ENCODE measurements at regions of chr1 and their contacts with region 1.

Region 1: GRCh38 chr1:21344750-21345443 is 54.6 kb upstream of the ECE1 start:
- DNase-seq: peak in 3 of 9 experiments; percentile 25 to 54 (median 30)
- ATAC-seq: peak; percentile 28
- H3K4me3 ChIP-seq: peak overlapping the region; percentile 75 to 94
- H3K4me3 Mint-ChIP-seq: peak overlapping the region; percentile 86
- H3K27ac ChIP-seq: peak overlapping the region in 1 of 2 experiments; percentile 55
- H3K27ac Mint-ChIP-seq: peak overlapping the region; percentile 76
- H3K4me1 ChIP-seq: peaks cover 53% of the 10 kb centered on the region
- H3K4me1 Mint-ChIP-seq: peaks cover 40% of the 10 kb centered on the region
- H3K27me3 ChIP-seq: peaks cover 0 to 8% of the 10 kb centered on the region in 2 experiments
- H3K27me3 Mint-ChIP-seq: no peaks in the 10 kb centered on the region
- CTCF ChIP-seq: no peak

Region 2: DNA sequence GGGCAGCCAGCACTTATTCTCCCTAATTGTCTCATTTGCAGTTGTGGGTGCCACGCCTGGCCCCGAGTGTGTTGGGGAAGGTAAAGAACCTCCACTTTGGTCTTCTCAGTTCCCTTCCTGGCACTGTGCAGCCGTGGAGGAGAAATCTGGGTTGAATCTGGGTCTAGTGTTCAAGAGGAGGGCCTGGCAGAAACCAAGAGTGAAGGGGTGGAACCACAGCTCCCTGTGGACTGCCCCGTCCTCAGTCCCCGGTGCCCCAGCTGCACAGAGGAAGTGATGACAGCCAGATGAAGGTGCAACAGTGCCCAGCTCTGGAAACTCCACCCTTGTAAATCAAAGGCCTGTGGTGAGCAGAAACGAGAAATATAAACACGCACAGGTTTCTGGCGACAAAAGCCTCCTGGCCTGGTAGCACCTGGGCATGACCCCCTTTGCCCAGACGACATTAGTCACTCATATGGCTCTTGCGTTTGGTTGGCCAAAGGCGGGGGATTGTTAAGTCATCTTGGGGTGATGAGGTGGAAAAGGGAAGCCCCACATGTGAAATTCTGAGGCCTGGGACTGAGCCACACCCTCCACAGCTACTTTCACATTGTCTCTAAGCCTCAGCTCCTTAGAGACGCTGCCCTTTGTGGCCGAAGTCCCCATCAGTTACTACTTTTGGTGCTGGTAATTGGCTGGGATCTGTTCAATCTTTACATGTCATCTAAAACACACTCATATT is 50.5 kb before region 1 on chr1:
- CTCF ChIA-PET with region 1: interaction called, 9 read pairs
- POLR2A ChIA-PET with region 1: interaction called, 42 read pairs
- intact Hi-C with region 1: loop called (anchors 1 kb)
- DNase-seq: peak; percentile 71 to 97 (median 85)
- ATAC-seq: peak; percentile 72
- H3K4me3 ChIP-seq: peak overlapping the region; percentile 44 to 86
- H3K4me3 Mint-ChIP-seq: peak overlapping the region; percentile 86
- H3K27ac ChIP-seq: peak overlapping the region; percentile 91 to 94
- H3K27ac Mint-ChIP-seq: peak overlapping the region; percentile 98
- H3K4me1 ChIP-seq: peaks cover 80% of the 10 kb centered on the region
- H3K4me1 Mint-ChIP-seq: peaks cover 82% of the 10 kb centered on the region
- H3K27me3 ChIP-seq: no peaks in the 10 kb centered on the region
- H3K27me3 Mint-ChIP-seq: no peaks in the 10 kb centered on the region
- CTCF ChIP-seq: no peak

Region 3: DNA sequence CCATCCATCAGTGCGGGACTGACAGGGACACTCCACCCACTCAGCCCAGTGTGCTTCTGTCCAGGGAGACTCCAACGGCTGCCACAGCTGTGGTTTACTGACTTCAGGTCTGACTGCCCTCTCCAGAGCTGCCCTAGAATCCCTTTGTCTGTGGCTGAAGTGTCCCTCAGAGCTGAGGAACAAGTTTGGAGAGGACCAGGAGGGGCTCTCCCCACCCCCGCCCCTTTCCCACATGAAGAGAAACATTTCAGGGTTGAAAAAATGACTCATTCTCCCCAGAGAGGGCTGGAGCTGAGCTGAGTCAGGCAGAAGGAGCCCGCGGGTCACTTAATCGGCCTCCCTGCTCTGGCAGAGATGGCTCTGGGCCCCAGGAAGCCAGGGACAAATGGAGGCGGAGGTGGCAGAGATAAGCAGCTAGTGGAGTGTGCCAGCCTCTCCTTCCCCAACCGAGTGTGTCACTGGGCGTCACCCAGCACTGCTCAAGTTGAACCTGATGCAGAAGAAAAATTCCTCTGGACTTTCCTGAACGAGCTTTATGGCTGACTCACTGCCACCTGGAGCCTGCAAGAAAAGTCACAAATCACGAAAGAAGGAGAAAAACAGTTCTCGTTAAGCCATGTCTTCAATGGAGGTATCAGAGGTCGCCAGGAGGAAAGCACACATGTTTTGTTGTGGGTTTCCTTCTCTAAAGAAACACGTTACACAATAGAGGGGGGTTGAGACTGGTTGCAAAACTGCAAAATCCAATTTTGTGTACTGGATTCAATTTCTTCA is 20.3 kb before region 1 on chr1:
- CTCF ChIA-PET with region 1: interaction called, 7 read pairs
- POLR2A ChIA-PET with region 1: interaction called, 16 read pairs
- intact Hi-C with region 1: loop called (anchors 2 kb)
- DNase-seq: peak in 8 of 9 experiments; percentile 26 to 71 (median 64)
- ATAC-seq: peak; percentile 64
- H3K4me3 ChIP-seq: peak overlapping the region in 1 of 2 experiments; percentile 4
- H3K4me3 Mint-ChIP-seq: peak overlapping the region; percentile 76
- H3K27ac ChIP-seq: peak overlapping the region; percentile 13 to 51
- H3K27ac Mint-ChIP-seq: peak overlapping the region; percentile 96
- H3K4me1 ChIP-seq: peaks cover 61% of the 10 kb centered on the region
- H3K4me1 Mint-ChIP-seq: peaks cover 74% of the 10 kb centered on the region
- H3K27me3 ChIP-seq: no peaks in the 10 kb centered on the region
- H3K27me3 Mint-ChIP-seq: no peaks in the 10 kb centered on the region
- CTCF ChIP-seq: no peak

Region 4: GRCh38 chr1:21334214-21335087 is 10.4 kb before region 1 on chr1:
- CTCF ChIA-PET with region 1: interaction called, 9 read pairs
- POLR2A ChIA-PET with region 1: interaction called, 27 read pairs
- intact Hi-C with region 1: loop called (anchors 1 kb)
- DNase-seq: peak; percentile 68 to 94 (median 84)
- ATAC-seq: peak; percentile 86
- H3K4me3 ChIP-seq: peak overlapping the region; percentile 29 to 47
- H3K4me3 Mint-ChIP-seq: peak overlapping the region; percentile 88
- H3K27ac ChIP-seq: peak overlapping the region; percentile 57 to 89
- H3K27ac Mint-ChIP-seq: peak overlapping the region; percentile 98
- H3K4me1 ChIP-seq: peaks cover 84% of the 10 kb centered on the region
- H3K4me1 Mint-ChIP-seq: peaks cover 85% of the 10 kb centered on the region
- H3K27me3 ChIP-seq: no peaks in the 10 kb centered on the region
- H3K27me3 Mint-ChIP-seq: no peaks in the 10 kb centered on the region
- CTCF ChIP-seq: peak; percentile 58

Region 5: DNA sequence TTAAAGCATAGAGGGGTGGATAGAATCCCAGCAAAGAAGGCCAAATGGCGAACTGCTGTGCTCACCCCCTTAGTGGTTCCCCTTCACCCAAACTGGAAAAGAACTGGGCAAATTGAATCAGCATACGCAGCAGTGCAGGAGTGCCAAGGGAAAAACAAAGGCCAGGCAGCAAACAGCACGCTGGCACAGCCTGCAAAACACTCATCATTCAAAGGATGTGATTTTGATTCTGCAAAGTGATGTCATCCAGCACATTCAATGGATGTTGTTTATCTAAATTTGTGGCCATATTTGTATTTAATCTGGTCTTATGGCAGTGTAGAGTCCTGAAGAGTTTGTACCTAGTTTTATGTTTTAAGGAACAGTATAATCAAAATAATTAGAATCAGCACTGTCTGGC is 17.2 kb after region 1 on chr1:
- CTCF ChIA-PET with region 1: no interaction called
- POLR2A ChIA-PET with region 1: no interaction called
- intact Hi-C with region 1: no loop called
- DNase-seq: no peak
- ATAC-seq: no peak
- H3K4me3 ChIP-seq: no peak overlapping the region
- H3K4me3 Mint-ChIP-seq: no peak overlapping the region
- H3K27ac ChIP-seq: no peak overlapping the region
- H3K27ac Mint-ChIP-seq: no peak overlapping the region
- H3K4me1 ChIP-seq: no peaks in the 10 kb centered on the region
- H3K4me1 Mint-ChIP-seq: peaks cover 5% of the 10 kb centered on the region
- H3K27me3 ChIP-seq: no peaks in the 10 kb centered on the region
- H3K27me3 Mint-ChIP-seq: no peaks in the 10 kb centered on the region
- CTCF ChIP-seq: no peak

Region 6: GRCh38 chr1:22052115-22053016 is 707.5 kb after region 1 on chr1 and contains the start of gene CDC42:
- CTCF ChIA-PET with region 1: no interaction called
- POLR2A ChIA-PET with region 1: no interaction called
- intact Hi-C with region 1: loop called in 1 of 2 experiments (anchors 10 kb)
- DNase-seq: peak; percentile 95 to 98 (median 96)
- ATAC-seq: peak; percentile 90
- H3K4me3 ChIP-seq: peak within 1 kb of the TSS; percentile 75 to 88
- H3K4me3 Mint-ChIP-seq: peak within 1 kb of the TSS; percentile 98
- H3K27ac ChIP-seq: peak within 1 kb of the TSS; percentile 98 to 99
- H3K27ac Mint-ChIP-seq: peak within 1 kb of the TSS; percentile 99
- H3K4me1 ChIP-seq: peaks cover 54% of the 10 kb centered on the region
- H3K4me1 Mint-ChIP-seq: peaks cover 60% of the 10 kb centered on the region
- H3K27me3 ChIP-seq: no peaks in the 10 kb centered on the region
- H3K27me3 Mint-ChIP-seq: no peaks in the 10 kb centered on the region
- CTCF ChIP-seq: no peak
- total RNA-seq, gene CDC42: 327 to 377 TPM

Region 7: GRCh38 chr1:23019094-23019862 is 1674.4 kb after region 1 on chr1 and contains the start of gene KDM1A:
- CTCF ChIA-PET with region 1: no interaction called
- POLR2A ChIA-PET with region 1: no interaction called
- intact Hi-C with region 1: loop called in 1 of 2 experiments (anchors 10 kb)
- DNase-seq: peak; percentile 89 to 98 (median 95)
- ATAC-seq: peak; percentile 98
- H3K4me3 ChIP-seq: peak within 1 kb of the TSS; percentile 57 to 90
- H3K4me3 Mint-ChIP-seq: peak within 1 kb of the TSS; percentile 99
- H3K27ac ChIP-seq: peak within 1 kb of the TSS; percentile 41 to 69
- H3K27ac Mint-ChIP-seq: peak within 1 kb of the TSS; percentile 93
- H3K4me1 ChIP-seq: peaks cover 14% of the 10 kb centered on the region
- H3K4me1 Mint-ChIP-seq: peaks cover 46% of the 10 kb centered on the region
- H3K27me3 ChIP-seq: no peaks in the 10 kb centered on the region
- H3K27me3 Mint-ChIP-seq: no peaks in the 10 kb centered on the region
- CTCF ChIP-seq: no peak
- total RNA-seq, gene KDM1A: 42.2 to 46.2 TPM